Naive thymus-derived CD4-positive, alpha-beta T cell (primary cell): ENCODE measurements at regions of chr13 and their contacts with region 1.

Region 1: GRCh38 chr13:97030705-97031452 is 36.6 kb upstream of the OXGR1 start:
- DNase-seq: no peak
- ATAC-seq: no peak
- H3K4me3 ChIP-seq: no peak overlapping the region
- H3K4me3 Mint-ChIP-seq: no peak overlapping the region
- H3K27ac ChIP-seq: no peak overlapping the region
- H3K27ac Mint-ChIP-seq: no peak overlapping the region
- H3K4me1 ChIP-seq: no peaks in the 10 kb centered on the region
- H3K4me1 Mint-ChIP-seq: peaks cover 0 to 2% (median 0%) of the 10 kb centered on the region in 7 donors
- H3K27me3 ChIP-seq: no peaks in the 10 kb centered on the region
- H3K27me3 Mint-ChIP-seq: peaks cover 7 to 37% (median 29%) of the 10 kb centered on the region in 5 donors

Region 2: DNA sequence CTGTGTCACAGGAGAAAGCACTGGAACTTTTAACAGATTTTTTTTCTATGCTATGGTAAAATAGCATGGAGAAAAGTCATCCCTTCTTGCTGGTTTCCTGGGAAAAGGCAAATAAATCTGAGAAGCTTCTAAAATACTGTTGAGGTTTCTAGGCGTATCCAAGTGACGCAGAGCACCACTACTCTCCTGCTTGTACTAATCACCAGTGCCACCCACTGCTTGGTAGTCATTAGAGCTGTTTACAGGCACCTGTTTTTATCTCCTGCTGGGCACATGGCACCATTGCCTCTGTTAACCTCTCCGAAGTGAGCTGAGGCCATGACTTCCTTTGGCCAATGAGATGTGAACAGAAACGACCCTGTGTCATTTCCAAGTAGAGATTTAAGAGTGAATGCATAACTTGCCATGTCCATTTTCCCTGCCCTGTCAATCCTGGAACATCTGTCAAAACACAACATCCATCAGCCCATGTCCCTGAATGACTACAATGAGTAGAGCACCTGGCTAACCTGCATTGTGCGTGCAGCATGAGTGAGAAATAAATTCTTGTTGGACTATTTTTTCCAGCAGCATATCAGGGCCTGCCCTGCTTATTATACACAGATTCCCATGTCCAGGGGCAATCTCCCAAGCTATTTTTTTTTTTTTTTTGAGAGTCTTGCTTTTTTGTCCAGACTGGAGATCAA is 19.3 kb before region 1 on chr13:
- CTCF ChIA-PET with region 1: no interaction called
- POLR2A ChIA-PET with region 1: no interaction called
- intact Hi-C with region 1: no loop called
- DNase-seq: no peak
- ATAC-seq: no peak
- H3K4me3 ChIP-seq: no peak overlapping the region
- H3K4me3 Mint-ChIP-seq: no peak overlapping the region
- H3K27ac ChIP-seq: no peak overlapping the region
- H3K27ac Mint-ChIP-seq: no peak overlapping the region
- H3K4me1 ChIP-seq: no peaks in the 10 kb centered on the region
- H3K4me1 Mint-ChIP-seq: peaks cover 3 to 13% (median 7%) of the 10 kb centered on the region in 7 donors
- H3K27me3 ChIP-seq: no peaks in the 10 kb centered on the region
- H3K27me3 Mint-ChIP-seq: peaks cover 8 to 52% (median 44%) of the 10 kb centered on the region in 5 donors

Region 3: GRCh38 chr13:97448503-97449230 is 417.8 kb after region 1 on chr13:
- CTCF ChIA-PET with region 1: no interaction called
- POLR2A ChIA-PET with region 1: no interaction called
- intact Hi-C with region 1: no loop called
- DNase-seq: no peak
- ATAC-seq: no peak
- H3K4me3 ChIP-seq: no peak overlapping the region
- H3K4me3 Mint-ChIP-seq: no peak overlapping the region
- H3K27ac ChIP-seq: no peak overlapping the region
- H3K27ac Mint-ChIP-seq: no peak overlapping the region
- H3K4me1 ChIP-seq: no peaks in the 10 kb centered on the region
- H3K4me1 Mint-ChIP-seq: peaks cover 0 to 8% (median 6%) of the 10 kb centered on the region in 7 donors
- H3K27me3 ChIP-seq: no peaks in the 10 kb centered on the region
- H3K27me3 Mint-ChIP-seq: no peaks in the 10 kb centered on the region

Region 4: GRCh38 chr13:97967948-97968347 is 937.1 kb after region 1 on chr13:
- CTCF ChIA-PET with region 1: no interaction called
- POLR2A ChIA-PET with region 1: no interaction called
- intact Hi-C with region 1: loop called in 1 of 2 experiments (anchors 10 kb)
- DNase-seq: no peak
- ATAC-seq: no peak
- H3K4me3 ChIP-seq: no peak overlapping the region
- H3K4me3 Mint-ChIP-seq: no peak overlapping the region
- H3K27ac ChIP-seq: no peak overlapping the region
- H3K27ac Mint-ChIP-seq: no peak overlapping the region
- H3K4me1 ChIP-seq: no peaks in the 10 kb centered on the region
- H3K4me1 Mint-ChIP-seq: no peaks in the 10 kb centered on the region
- H3K27me3 ChIP-seq: no peaks in the 10 kb centered on the region
- H3K27me3 Mint-ChIP-seq: peaks cover 11 to 20% (median 16%) of the 10 kb centered on the region in 5 donors